ENCODE measurements at regions of chr7 and their contacts with region 1.

Region 1: GRCh38 chr7:71733107-71733870 is 601.3 kb downstream of the GALNT17 start:
- DNase-seq: peak; percentile 86
- ATAC-seq: peak; percentile 90

Region 2: GRCh38 chr7:70829221-70830059 is 903.8 kb before region 1 on chr7:
- intact Hi-C with region 1: loop called (anchors 10 kb)
- DNase-seq: peak; percentile 74
- ATAC-seq: peak; percentile 88

Region 3: DNA sequence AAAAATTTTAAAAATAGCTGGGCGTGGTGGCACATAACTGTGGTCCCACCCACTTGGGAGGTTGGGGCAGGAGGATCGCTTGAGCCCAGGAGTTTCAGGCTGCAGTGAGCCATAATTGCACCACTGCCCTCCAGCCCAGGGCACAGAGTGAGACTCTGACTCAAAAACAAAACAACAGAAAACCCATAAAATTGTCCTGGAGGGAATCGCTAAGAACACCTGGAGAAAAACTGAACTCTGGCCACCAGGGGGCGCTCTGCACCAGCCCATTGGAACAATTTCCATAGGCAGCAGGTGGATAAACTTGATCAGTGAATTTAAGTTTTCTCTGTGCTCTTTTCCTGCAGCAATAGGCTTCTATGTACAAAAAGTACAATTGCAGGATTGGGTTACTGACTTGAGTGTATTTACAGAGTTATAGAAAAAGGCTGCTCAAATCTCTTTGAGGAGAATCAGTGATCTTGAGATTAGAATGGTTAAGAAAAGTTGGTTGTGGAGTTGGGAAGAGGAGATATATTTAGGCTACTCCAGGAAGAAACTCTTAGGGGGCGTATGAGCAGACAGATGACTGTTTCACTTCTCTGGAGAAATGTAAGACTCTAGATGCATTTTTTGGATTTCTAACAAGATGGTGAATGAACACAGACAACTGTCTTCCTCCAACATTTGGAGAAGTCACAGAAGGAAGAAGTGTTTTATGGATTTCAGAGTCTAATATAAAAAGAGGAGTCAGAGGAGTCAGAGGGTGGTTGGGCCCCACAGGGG is 876.2 kb before region 1 on chr7:
- intact Hi-C with region 1: loop called (anchors 1 kb)
- DNase-seq: peak; percentile 69
- ATAC-seq: peak; percentile 51

Region 4: GRCh38 chr7:71871446-71871845 is 138.2 kb after region 1 on chr7:
- intact Hi-C with region 1: no loop called
- DNase-seq: no peak
- ATAC-seq: no peak

Region 5: GRCh38 chr7:71982851-71983250 is 249.6 kb after region 1 on chr7:
- intact Hi-C with region 1: no loop called
- DNase-seq: no peak
- ATAC-seq: no peak